ENCODE measurements at regions of chr22 and their contacts with region 1.

Region 1: GRCh38 chr22:40818747-40819598 is at the start of gene SLC25A17:
- DNase-seq: peak; percentile 39
- ATAC-seq: peak; percentile 93
- H3K4me3 ChIP-seq: peak within 1 kb of the TSS; percentile 89
- H3K27ac ChIP-seq: peak within 1 kb of the TSS; percentile 84
- H3K4me1 ChIP-seq: no peaks in the 10 kb centered on the region
- H3K27me3 ChIP-seq: no peaks in the 10 kb centered on the region
- CTCF ChIP-seq: peak; percentile 30 to 41 (median 34); a peak in 3 of 6 replicates
- EP300 ChIP-seq: no peak
- POLR2A ChIP-seq: peak; percentile 70
- RAD21 ChIP-seq: no peak
- polyA plus RNA-seq, gene SLC25A17: 77.7 to 113 TPM

Region 2: DNA sequence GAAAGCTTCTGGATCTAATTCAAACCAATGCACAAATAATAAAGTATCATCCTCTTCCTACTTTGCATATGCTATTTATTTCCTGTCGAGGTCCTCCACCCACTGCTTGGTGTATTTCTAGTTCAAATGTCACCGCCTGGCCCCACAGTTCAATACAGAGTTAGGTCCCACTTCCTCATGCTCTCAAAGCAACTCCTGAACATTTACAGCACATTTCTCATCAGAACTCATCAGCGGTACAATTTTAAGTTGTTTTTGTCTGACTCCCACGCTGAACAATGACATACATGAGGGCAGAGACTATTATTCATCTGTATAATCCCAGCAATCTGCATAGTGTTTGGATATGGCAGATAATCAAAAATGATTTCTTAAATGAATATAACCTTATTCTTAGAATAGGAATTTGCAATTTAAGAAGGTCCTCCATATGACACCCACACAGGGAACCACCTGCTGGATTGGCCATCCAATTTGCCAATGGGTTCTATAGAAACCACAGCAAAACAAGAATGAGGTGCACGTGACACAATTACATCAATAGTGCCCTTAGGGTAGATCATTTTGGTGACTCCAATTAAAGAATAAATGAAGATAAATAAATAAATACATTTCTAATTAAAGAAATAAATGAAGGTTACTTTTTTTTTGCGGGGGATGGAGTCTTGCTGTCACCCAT is 54.1 kb before region 1 on chr22:
- CTCF ChIA-PET with region 1: no interaction called
- POLR2A ChIA-PET with region 1: no interaction called
- RAD21 ChIA-PET with region 1: no interaction called
- SMC1A ChIA-PET with region 1: interaction called, 11 read pairs
- in situ Hi-C with region 1: no loop called
- intact Hi-C with region 1: no loop called
- DNase-seq: peak; percentile 31
- ATAC-seq: peak; percentile 72
- H3K4me3 ChIP-seq: no peak overlapping the region
- H3K27ac ChIP-seq: peak overlapping the region; percentile 45
- H3K4me1 ChIP-seq: peaks cover 16% of the 10 kb centered on the region; the same call in 1 of the 2 replicates
- H3K27me3 ChIP-seq: no peaks in the 10 kb centered on the region
- CTCF ChIP-seq: no peak
- EP300 ChIP-seq: no peak
- POLR2A ChIP-seq: no peak
- RAD21 ChIP-seq: 0 out of 2 replicates have a peak, but pooled peaks have one; percentile 11

Region 3: GRCh38 chr22:40829131-40829530 is 10.2 kb after region 1 on chr22:
- CTCF ChIA-PET with region 1: interaction called, 6 read pairs
- POLR2A ChIA-PET with region 1: no interaction called
- RAD21 ChIA-PET with region 1: no interaction called
- SMC1A ChIA-PET with region 1: interaction called, 14 read pairs
- in situ Hi-C with region 1: no loop called
- intact Hi-C with region 1: no loop called
- DNase-seq: no peak
- ATAC-seq: no peak
- H3K4me3 ChIP-seq: no peak overlapping the region
- H3K27ac ChIP-seq: no peak overlapping the region
- H3K4me1 ChIP-seq: no peaks in the 10 kb centered on the region
- H3K27me3 ChIP-seq: no peaks in the 10 kb centered on the region
- CTCF ChIP-seq: no peak
- EP300 ChIP-seq: no peak
- POLR2A ChIP-seq: no peak
- RAD21 ChIP-seq: no peak

Region 4: DNA sequence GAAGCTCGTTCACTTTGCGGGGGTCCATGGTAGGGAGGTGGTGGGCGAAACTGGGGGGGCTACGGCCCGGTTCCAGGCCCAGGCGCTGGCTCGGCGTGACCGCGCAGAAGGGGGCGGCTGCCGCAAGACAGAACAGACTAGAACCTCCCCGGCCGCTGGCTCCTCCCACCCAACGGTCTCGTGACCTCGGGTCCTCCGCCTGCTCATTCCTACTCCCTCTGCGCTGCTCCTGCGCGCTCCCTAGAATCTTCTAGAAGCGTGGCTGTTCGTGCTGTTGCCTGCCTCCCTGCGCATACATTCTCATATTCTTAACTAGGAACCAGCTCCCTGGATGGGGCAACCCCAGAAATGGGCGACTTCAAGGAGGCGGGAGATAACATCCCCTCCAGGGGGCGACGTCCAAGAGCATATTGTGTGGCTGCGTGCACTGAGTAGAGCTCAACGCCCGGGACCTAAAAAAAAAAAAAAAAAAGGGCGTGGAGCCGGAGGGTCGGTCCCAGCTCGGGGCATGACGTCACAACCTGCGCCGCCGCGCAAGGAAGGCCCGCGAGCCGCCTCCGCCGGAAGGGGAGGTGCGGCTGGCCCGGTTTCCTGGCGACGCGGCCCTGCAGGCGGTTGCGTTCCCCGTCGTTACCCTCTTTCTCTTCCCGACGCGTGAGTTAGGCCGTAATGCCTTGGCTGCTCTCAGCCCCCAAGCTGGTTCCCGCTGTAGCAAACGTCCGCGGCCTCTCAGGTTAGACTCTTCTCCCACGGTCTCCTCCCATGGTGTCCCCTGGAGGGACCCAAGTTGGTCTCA is 37.7 kb after region 1 on chr22 and contains the starts of genes ST13 and XPNPEP3:
- CTCF ChIA-PET with region 1: interaction called, 4 read pairs
- POLR2A ChIA-PET with region 1: interaction called, 41 read pairs
- RAD21 ChIA-PET with region 1: interaction called, 14 read pairs
- SMC1A ChIA-PET with region 1: interaction called, 11 read pairs
- in situ Hi-C with region 1: no loop called
- intact Hi-C with region 1: no loop called
- DNase-seq: peak; percentile 82
- ATAC-seq: peak; percentile 96
- H3K4me3 ChIP-seq: peak within 1 kb of the TSS; percentile 98
- H3K27ac ChIP-seq: peak within 1 kb of the TSS; percentile 96
- H3K4me1 ChIP-seq: peaks cover 4% of the 10 kb centered on the region
- H3K27me3 ChIP-seq: no peaks in the 10 kb centered on the region
- CTCF ChIP-seq: peak; percentile 21 to 33 (median 30); a peak in 3 of 6 replicates
- EP300 ChIP-seq: peak in 1 of 2 experiments; percentile 60; a peak in 2 of 4 replicates
- POLR2A ChIP-seq: peak; percentile 79
- RAD21 ChIP-seq: no peak
- polyA plus RNA-seq, gene ST13: 52.5 to 86.9 TPM
- polyA plus RNA-seq, gene XPNPEP3: 6.7 to 7.5 TPM

Region 5: GRCh38 chr22:40939202-40939601 is 120.2 kb after region 1 on chr22:
- CTCF ChIA-PET with region 1: no interaction called
- POLR2A ChIA-PET with region 1: no interaction called
- RAD21 ChIA-PET with region 1: no interaction called
- SMC1A ChIA-PET with region 1: no interaction called
- in situ Hi-C with region 1: no loop called
- intact Hi-C with region 1: no loop called
- DNase-seq: no peak
- ATAC-seq: peak; percentile 54; the same call in 2 of the 3 replicates
- H3K4me3 ChIP-seq: no peak overlapping the region
- H3K27ac ChIP-seq: no peak overlapping the region
- H3K4me1 ChIP-seq: peaks cover 17% of the 10 kb centered on the region
- H3K27me3 ChIP-seq: no peaks in the 10 kb centered on the region
- CTCF ChIP-seq: no peak
- EP300 ChIP-seq: no peak
- POLR2A ChIP-seq: no peak
- RAD21 ChIP-seq: no peak

Region 6: DNA sequence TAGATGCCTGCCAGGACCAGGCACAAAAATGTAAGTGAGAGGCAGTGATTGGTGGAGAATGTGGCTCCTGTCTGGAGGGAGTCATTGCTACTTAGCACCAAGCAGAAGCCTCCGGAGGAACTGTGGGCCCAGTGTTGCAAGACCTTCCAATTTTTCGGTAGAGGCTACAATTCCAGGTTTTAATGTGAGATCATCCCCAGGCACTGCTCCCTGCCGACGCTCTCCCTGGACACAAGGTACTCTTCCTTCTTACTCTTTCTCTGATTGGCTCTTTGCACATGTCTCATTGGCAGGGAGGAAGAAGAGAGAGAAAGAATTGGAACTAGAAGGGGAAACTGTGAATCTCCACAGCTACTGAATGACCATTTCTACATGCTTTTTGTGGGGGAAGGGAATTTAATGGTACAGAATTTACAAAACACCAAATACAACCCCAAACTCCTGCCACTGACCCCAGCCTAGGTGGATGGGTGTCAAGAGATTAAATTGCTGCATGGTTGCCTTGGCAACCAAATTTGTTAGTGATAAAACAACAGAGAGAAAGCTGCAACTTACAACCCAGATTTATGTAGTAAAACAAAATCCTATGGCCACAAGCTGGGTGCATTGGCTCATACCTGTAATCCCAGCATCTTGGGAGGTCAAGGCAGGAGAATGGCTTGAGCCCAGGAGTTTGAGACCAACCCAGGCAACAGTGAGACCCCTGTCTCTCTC is 219.9 kb after region 1 on chr22:
- CTCF ChIA-PET with region 1: no interaction called
- POLR2A ChIA-PET with region 1: no interaction called
- RAD21 ChIA-PET with region 1: no interaction called
- SMC1A ChIA-PET with region 1: no interaction called
- in situ Hi-C with region 1: no loop called
- intact Hi-C with region 1: no loop called
- DNase-seq: no peak
- ATAC-seq: no peak
- H3K4me3 ChIP-seq: no peak overlapping the region
- H3K27ac ChIP-seq: no peak overlapping the region
- H3K4me1 ChIP-seq: no peaks in the 10 kb centered on the region
- H3K27me3 ChIP-seq: no peaks in the 10 kb centered on the region
- CTCF ChIP-seq: no peak
- EP300 ChIP-seq: no peak
- POLR2A ChIP-seq: no peak
- RAD21 ChIP-seq: no peak